ENCODE measurements at regions of chr10 and their contacts with region 1.

Region 1: GRCh38 chr10:45373576-45374349 is at the start of gene ALOX5:
- DNase-seq: peak; percentile 67
- ATAC-seq: peak; percentile 53
- H3K4me3 Mint-ChIP-seq: peak within 1 kb of the TSS; percentile 94
- H3K27ac Mint-ChIP-seq: peak within 1 kb of the TSS; percentile 93
- H3K4me1 Mint-ChIP-seq: peaks cover 88% of the 10 kb centered on the region
- H3K27me3 Mint-ChIP-seq: no peaks in the 10 kb centered on the region
- CTCF ChIP-seq: no peak
- total RNA-seq, gene ALOX5: 153 and 181 TPM in 2 replicates

Region 2: DNA sequence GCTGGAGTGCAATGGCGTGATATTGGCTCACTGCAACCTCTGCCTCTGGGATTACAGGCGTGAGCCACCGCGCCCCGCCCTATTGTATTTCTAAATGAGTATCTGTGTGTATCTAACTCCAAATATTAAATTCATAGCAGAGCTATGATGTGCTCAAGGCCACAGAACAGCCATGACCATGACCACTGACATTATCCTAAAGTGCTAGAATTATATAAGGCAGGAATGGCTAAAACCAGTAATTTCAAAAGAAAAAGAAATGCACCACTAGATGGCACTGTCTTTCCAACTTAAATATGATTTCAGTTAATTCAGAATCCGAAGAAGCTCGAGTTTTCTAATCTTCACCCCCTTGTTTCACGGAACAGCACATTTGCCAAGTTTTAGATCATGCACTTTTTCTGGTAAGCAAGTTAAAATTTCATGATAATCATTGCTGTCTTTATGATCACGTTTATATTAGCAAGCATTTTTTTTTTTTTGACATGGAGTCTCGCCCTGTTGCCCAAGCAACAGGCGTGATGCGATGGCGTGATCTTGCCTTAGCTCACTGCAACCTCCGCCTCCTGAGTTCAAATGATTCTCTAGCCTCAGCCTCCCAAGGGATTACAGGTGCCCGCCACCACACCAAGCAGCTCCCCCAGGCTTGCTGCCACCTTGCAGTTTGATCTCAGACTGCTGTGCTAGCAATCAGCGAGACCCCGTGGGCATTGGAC is 123.6 kb before region 1 on chr10:
- CTCF ChIA-PET with region 1: interaction called, 8 read pairs
- POLR2A ChIA-PET with region 1: interaction called, 5 read pairs
- intact Hi-C with region 1: loop called (anchors 2 kb)
- DNase-seq: peak; percentile 42
- ATAC-seq: peak; percentile 84
- H3K4me3 Mint-ChIP-seq: peak overlapping the region; percentile 85
- H3K27ac Mint-ChIP-seq: peak overlapping the region; percentile 91
- H3K4me1 Mint-ChIP-seq: peaks cover 26% of the 10 kb centered on the region
- H3K27me3 Mint-ChIP-seq: peaks cover 2% of the 10 kb centered on the region
- CTCF ChIP-seq: peak; percentile 81

Region 3: DNA sequence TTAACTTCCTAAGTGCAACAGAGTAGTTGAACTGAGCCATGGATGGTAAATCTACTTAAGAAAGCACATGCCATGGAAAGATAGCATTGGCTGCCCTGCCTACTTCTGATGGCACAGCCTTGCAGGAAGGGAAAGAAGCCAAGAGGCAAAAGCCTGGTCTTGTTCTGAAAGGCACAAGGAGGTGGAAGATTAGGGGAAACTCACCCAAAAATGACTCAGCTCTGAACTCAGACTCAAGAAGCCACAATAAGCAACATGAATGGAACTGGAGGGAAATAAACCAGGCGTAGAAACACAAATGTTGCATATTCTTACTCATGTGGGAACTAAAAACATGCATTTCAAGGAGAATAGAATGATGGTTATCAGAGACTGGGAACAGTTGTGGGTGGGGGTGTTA is 20.6 kb before region 1 on chr10:
- CTCF ChIA-PET with region 1: interaction called, 3 read pairs
- POLR2A ChIA-PET with region 1: interaction called, 6 read pairs
- intact Hi-C with region 1: loop called (anchors 2 kb)
- DNase-seq: no peak
- ATAC-seq: peak; percentile 42
- H3K4me3 Mint-ChIP-seq: peak overlapping the region; percentile 75
- H3K27ac Mint-ChIP-seq: peak overlapping the region; percentile 56
- H3K4me1 Mint-ChIP-seq: peaks cover 45% of the 10 kb centered on the region
- H3K27me3 Mint-ChIP-seq: no peaks in the 10 kb centered on the region
- CTCF ChIP-seq: no peak

Region 4: GRCh38 chr10:45420453-45421192 is 46.9 kb after region 1 on chr10:
- CTCF ChIA-PET with region 1: no interaction called
- POLR2A ChIA-PET with region 1: interaction called, 26 read pairs
- intact Hi-C with region 1: loop called (anchors 1 kb)
- DNase-seq: peak; percentile 50
- ATAC-seq: peak; percentile 56
- H3K4me3 Mint-ChIP-seq: peak overlapping the region; percentile 95
- H3K27ac Mint-ChIP-seq: peak overlapping the region; percentile 97
- H3K4me1 Mint-ChIP-seq: peaks cover 65% of the 10 kb centered on the region
- H3K27me3 Mint-ChIP-seq: no peaks in the 10 kb centered on the region
- CTCF ChIP-seq: no peak

Region 5: GRCh38 chr10:45594276-45595106 is 220.7 kb after region 1 on chr10:
- CTCF ChIA-PET with region 1: no interaction called
- POLR2A ChIA-PET with region 1: no interaction called
- intact Hi-C with region 1: loop called (anchors 2 kb)
- DNase-seq: peak; percentile 91
- ATAC-seq: peak; percentile 88
- H3K4me3 Mint-ChIP-seq: peak overlapping the region; percentile 86
- H3K27ac Mint-ChIP-seq: peak overlapping the region; percentile 91
- H3K4me1 Mint-ChIP-seq: peaks cover 42% of the 10 kb centered on the region
- H3K27me3 Mint-ChIP-seq: no peaks in the 10 kb centered on the region
- CTCF ChIP-seq: no peak

Region 6: GRCh38 chr10:46022978-46023702 is 649.4 kb after region 1 on chr10:
- CTCF ChIA-PET with region 1: no interaction called
- POLR2A ChIA-PET with region 1: no interaction called
- intact Hi-C with region 1: loop called (anchors 10 kb)
- DNase-seq: peak; percentile 71
- ATAC-seq: peak; percentile 94
- H3K4me3 Mint-ChIP-seq: peak overlapping the region; percentile 87
- H3K27ac Mint-ChIP-seq: peak overlapping the region; percentile 53
- H3K4me1 Mint-ChIP-seq: peaks cover 80% of the 10 kb centered on the region
- H3K27me3 Mint-ChIP-seq: no peaks in the 10 kb centered on the region
- CTCF ChIP-seq: no peak